ENCODE measurements at regions of chr22 and their contacts with region 1.

Region 1: DNA sequence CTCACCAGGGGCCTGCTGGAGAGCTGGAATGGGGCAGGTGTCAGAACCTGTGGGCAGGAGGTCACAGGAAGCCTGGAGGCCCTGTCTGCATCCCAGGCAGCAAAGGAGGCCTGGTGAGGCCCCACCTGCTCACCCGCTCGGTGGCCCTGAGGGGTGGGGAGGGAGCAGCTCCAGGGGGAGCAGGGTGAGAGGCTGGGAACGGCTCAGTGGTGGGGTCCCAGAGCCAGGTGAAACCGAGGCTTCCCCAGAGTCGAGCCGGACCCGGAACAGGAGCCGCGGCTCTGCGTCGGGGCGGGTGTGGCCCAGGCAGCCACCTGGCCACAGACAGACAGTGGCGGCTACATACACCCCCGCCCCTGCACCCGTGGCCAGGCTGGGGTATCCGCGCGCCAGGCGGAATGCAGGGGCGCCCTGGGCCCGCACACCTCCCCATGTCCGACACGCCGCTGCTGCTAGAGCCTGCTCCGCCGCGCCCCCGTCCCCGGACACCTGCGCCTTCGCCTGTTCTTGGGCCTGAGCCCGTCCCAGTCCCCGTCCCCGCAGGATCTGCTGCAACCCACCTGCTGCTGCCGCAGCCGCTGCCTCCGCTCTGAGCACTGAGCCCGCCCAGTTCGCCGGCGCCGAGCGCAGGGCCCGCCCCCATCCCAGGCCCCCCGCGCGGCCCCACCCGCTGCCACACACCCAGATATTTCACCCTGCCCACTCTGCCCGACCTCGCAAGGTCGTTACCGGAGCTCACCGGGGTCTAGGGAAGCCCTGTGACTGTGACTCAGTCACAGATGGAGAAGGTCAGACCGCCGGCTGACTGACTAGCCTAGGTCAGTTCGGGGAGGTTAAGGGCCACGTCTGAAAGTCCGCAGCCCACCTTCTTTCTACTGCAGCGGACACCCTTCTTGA is at the start of gene SLC7A4:
- DNase-seq: no peak
- ATAC-seq: peak; percentile 39
- H3K4me3 ChIP-seq: no peak within 1 kb of the TSS
- H3K27ac ChIP-seq: no peak within 1 kb of the TSS
- H3K4me1 ChIP-seq: peaks cover 10% of the 10 kb centered on the region
- H3K27me3 ChIP-seq: no peaks in the 10 kb centered on the region
- CTCF ChIP-seq: no peak
- POLR2A ChIP-seq: no peak
- total RNA-seq, gene SLC7A4: 1.3 to 1.8 TPM

Region 2: DNA sequence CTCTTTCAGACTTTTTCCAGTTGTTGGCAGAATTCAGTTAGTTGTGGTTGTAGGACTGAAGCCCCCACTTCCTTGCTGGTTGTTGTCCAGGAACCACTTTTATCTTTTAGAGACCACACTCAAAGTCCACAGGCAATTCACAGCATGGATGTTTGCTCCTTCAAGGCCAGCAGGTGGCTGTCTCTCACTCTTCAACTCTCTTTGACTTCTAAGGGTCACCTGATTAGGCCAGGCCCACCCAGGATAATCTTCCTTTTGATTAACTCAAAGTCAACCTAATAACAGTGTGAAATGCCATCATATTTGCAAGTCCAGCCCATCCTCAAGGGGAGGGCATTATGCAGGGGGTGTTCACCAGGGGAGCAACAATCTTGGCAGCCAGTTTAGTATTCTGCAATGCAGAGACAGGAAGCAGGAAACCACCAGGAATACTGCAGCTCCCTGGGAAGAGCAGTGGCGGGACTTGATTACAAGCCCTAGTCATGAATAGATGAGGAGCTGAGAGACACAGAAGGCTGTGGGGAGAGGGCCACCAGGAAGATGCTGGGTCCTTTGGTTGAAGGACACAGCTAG is 66.0 kb after region 1 on chr22:
- intact Hi-C with region 1: loop called (anchors 10 kb)
- DNase-seq: no peak
- ATAC-seq: no peak
- H3K4me3 ChIP-seq: no peak overlapping the region
- H3K27ac ChIP-seq: no peak overlapping the region
- H3K4me1 ChIP-seq: peaks cover 11% of the 10 kb centered on the region
- H3K27me3 ChIP-seq: no peaks in the 10 kb centered on the region
- CTCF ChIP-seq: no peak
- POLR2A ChIP-seq: no peak

Measured in body of pancreas (tissue), 4 donors.